Adrenal gland (tissue), 19 donors: ENCODE measurements at regions of chr6 and their contacts with region 1.

Region 1: DNA sequence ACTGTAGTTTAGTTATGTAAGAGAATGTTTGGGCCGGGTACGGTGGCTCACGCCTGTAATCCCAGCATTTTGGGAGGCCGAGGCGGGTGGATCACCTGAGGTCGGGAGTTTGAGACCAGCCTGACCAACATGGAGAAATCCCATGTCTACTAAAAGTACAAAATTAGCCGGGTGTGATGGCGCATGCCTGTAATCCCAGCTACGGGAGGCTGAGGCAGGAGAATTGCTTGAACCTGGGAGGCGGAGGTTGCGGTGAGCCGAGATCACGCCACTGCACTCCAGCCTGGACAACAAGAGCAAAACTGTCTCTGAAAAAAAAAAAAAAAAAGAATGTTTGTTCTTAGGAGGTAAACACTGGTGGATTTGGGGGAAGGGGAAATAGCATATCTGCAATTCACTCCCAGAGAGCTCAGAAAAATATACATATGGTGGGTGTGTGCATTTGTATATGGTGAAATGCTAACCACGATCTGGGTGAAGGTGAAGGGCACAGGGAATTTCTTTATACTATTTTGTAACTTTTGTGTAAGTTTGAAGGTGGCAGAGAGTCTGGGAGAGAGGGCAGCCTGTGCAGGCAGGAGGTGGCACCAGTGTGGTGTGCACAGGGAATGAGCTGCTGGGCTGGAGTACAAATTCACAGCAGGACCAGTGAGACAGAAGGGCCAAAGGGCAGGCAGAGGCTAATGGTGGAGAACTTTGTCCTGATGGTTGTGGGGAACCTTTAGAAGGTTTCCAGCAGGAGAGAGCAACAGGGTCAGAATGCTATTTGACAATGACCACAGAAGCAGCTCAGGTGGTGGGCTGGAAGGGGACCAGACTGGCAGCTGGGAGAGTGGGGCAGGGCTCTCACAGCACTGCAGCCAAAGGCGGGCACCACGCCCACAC is 42.4 kb downstream of the SSR1 start:
- DNase-seq: peak in 1 of 7 donors; percentile 11
- H3K4me3 ChIP-seq: no peak overlapping the region
- H3K27ac ChIP-seq: no peak overlapping the region
- H3K4me1 ChIP-seq: peaks cover 0 to 6% of the 10 kb centered on the region in 2 donors
- H3K27me3 ChIP-seq: no peaks in the 10 kb centered on the region
- CTCF ChIP-seq: no peak
- POLR2A ChIP-seq: no peak

Region 2: GRCh38 chr6:7166410-7167305 is 103.9 kb before region 1 on chr6:
- intact Hi-C with region 1: no loop called
- DNase-seq: peak in 1 of 7 donors; percentile 53
- H3K4me3 ChIP-seq: no peak overlapping the region
- H3K27ac ChIP-seq: peak overlapping the region in 2 of 5 donors; percentile 28 to 46
- H3K4me1 ChIP-seq: peaks cover 56 to 88% of the 10 kb centered on the region in 2 donors
- H3K27me3 ChIP-seq: no peaks in the 10 kb centered on the region
- CTCF ChIP-seq: no peak
- POLR2A ChIP-seq: no peak

Region 3: DNA sequence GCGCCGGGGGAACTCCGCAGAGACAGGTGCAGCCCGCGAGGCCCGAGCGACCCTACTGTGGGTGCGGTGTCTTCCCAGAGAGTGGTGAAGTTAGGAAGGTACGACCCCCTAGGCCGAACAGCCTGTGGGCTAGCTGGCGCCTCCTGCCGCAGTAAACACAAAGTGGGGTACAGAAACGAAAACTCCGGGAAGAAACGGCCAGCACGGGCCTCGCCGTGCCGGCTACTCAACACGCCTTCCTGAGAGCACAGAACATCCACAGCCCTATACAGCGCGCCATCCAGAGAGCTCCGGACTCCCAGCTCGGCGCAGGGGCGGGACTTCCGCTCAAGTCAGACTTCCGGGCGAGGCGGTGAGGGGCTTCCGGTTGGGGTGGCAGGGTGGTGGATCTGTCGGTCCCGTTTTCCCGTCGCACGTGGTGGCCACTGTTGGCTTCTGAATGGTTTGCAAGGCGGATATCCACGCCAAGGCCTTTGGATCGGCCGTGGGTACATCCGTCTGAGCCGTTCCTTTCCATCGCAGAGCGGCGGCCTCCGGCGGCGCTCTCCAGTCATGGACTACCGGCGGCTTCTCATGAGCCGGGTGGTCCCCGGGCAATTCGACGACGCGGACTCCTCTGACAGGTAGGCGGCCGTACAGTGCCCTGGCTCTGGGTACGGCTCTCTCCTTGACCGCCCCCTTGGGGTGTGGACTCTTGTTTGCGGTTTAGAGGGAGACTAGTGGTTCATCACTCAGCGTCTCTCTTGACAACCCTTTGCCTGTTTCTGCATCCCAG is 119.1 kb after region 1 on chr6 and contains the starts of genes CAGE1 and RIOK1:
- intact Hi-C with region 1: loop called in 1 of 2 experiments (anchors 10 kb)
- DNase-seq: peak; percentile 94 to 97 (median 97)
- H3K4me3 ChIP-seq: peak within 1 kb of the TSS; percentile 29 to 83 (median 76)
- H3K27ac ChIP-seq: peak within 1 kb of the TSS; percentile 87 to 93 (median 91)
- H3K4me1 ChIP-seq: peaks cover 11 to 37% of the 10 kb centered on the region in 2 donors
- H3K27me3 ChIP-seq: no peaks in the 10 kb centered on the region
- CTCF ChIP-seq: peak in 4 of 6 experiments; percentile 11 to 38 (median 24)
- POLR2A ChIP-seq: peak; percentile 39 to 88
- total RNA-seq, gene CAGE1: 0.06 to 0.25 (median 0.16) TPM in 4 of 9 donors, not detected in the others
- total RNA-seq, gene RIOK1: 6.0 to 18.8 (median 14.9) TPM